Activated naive CD4-positive, alpha-beta T cell treated with anti-CD3 and anti-CD28 coated beads for 36 hours (primary cell): ENCODE measurements at regions of chr16 and their contacts with region 1.

Region 1: GRCh38 chr16:2429034-2429770 is at the start of gene CCNF:
- DNase-seq: peak; percentile 98
- H3K4me3 Mint-ChIP-seq: peak within 1 kb of the TSS; percentile 94
- H3K27ac Mint-ChIP-seq: peak within 1 kb of the TSS; percentile 81
- H3K4me1 Mint-ChIP-seq: peaks cover 16% of the 10 kb centered on the region
- H3K27me3 Mint-ChIP-seq: peaks cover 4% of the 10 kb centered on the region
- total RNA-seq, gene CCNF: 73.5 to 74.5 TPM

Region 2: GRCh38 chr16:2213817-2214720 is 215.1 kb before region 1 on chr16:
- CTCF ChIA-PET with region 1: no interaction called
- intact Hi-C with region 1: loop called (anchors 10 kb)
- DNase-seq: no peak
- H3K4me3 Mint-ChIP-seq: peak overlapping the region; percentile 73
- H3K27ac Mint-ChIP-seq: no peak overlapping the region
- H3K4me1 Mint-ChIP-seq: peaks cover 22% of the 10 kb centered on the region
- H3K27me3 Mint-ChIP-seq: no peaks in the 10 kb centered on the region

Region 3: DNA sequence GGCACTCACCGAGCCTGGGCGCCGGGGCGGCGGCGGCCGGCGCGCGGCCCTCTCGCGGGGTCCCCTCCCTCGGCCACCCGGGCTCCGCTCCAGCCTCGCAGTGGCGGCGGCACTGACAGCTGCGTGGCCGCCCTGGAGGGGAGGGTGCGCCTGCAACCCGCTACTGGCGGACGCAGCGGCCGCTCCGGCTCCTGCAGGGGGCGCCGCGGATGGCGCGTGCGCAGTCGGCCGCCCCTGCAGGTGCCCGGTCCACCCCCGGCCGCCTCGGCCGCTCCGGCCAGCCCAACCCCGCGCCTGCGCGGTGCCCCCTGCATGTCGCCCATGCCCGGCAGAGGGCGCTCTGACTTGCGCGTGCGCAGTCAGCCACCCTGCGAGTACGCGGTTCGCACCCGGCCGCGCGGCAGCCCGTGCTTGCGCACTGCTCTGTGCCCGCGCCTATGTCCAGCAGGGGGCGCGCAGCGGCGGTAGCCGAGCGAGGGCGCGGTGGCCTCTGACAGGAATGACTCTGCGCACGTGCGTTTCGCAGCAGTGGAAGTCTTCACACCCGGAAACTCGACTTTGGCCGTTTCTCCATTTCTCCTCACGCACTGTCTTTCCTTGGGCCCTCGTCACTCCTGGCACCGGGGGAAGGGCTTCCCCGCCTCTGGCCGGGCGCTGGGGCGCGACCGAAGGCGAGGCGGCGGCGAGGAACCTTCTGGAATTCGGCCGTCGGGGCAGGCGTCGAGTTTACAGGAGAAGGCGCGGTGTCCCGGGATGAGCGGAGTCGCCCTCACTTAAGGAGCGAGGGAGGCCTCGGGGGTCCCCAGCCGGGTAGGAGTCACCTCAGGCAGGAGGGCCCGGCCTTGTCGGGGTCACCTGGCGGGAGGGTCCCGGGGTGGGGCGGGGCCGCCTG is 88.4 kb before region 1 on chr16 and contains the start of gene ABCA3:
- CTCF ChIA-PET with region 1: no interaction called
- intact Hi-C with region 1: loop called (anchors 1 kb)
- DNase-seq: peak; percentile 95
- H3K4me3 Mint-ChIP-seq: peak within 1 kb of the TSS; percentile 85
- H3K27ac Mint-ChIP-seq: no peak within 1 kb of the TSS
- H3K4me1 Mint-ChIP-seq: peaks cover 24% of the 10 kb centered on the region
- H3K27me3 Mint-ChIP-seq: peaks cover 8% of the 10 kb centered on the region
- total RNA-seq, gene ABCA3: 2.6 to 3.1 TPM

Region 4: GRCh38 chr16:2365397-2366294 is 63.6 kb before region 1 on chr16:
- CTCF ChIA-PET with region 1: no interaction called
- intact Hi-C with region 1: no loop called
- DNase-seq: no peak
- H3K4me3 Mint-ChIP-seq: no peak overlapping the region
- H3K27ac Mint-ChIP-seq: no peak overlapping the region
- H3K4me1 Mint-ChIP-seq: no peaks in the 10 kb centered on the region
- H3K27me3 Mint-ChIP-seq: peaks cover 13% of the 10 kb centered on the region

Region 5: GRCh38 chr16:2474877-2475412 is 45.7 kb after region 1 on chr16 and contains the start of gene TBC1D24:
- CTCF ChIA-PET with region 1: no interaction called
- intact Hi-C with region 1: loop called (anchors 5 kb)
- DNase-seq: peak; percentile 77
- H3K4me3 Mint-ChIP-seq: peak within 1 kb of the TSS; percentile 77
- H3K27ac Mint-ChIP-seq: no peak within 1 kb of the TSS
- H3K4me1 Mint-ChIP-seq: peaks cover 18% of the 10 kb centered on the region
- H3K27me3 Mint-ChIP-seq: peaks cover 19% of the 10 kb centered on the region
- total RNA-seq, gene TBC1D24: 8.1 to 8.6 TPM

Region 6: GRCh38 chr16:2486645-2487516 is 57.7 kb after region 1 on chr16:
- CTCF ChIA-PET with region 1: no interaction called
- intact Hi-C with region 1: loop called (anchors 1 kb)
- DNase-seq: peak; percentile 94
- H3K4me3 Mint-ChIP-seq: peak overlapping the region; percentile 10
- H3K27ac Mint-ChIP-seq: peak overlapping the region; percentile 69
- H3K4me1 Mint-ChIP-seq: peaks cover 16% of the 10 kb centered on the region
- H3K27me3 Mint-ChIP-seq: no peaks in the 10 kb centered on the region

Region 7: GRCh38 chr16:2500918-2501750 is 71.9 kb after region 1 on chr16:
- CTCF ChIA-PET with region 1: interaction called, 3 read pairs
- intact Hi-C with region 1: loop called (anchors 1 kb)
- DNase-seq: peak; percentile 84
- H3K4me3 Mint-ChIP-seq: no peak overlapping the region
- H3K27ac Mint-ChIP-seq: no peak overlapping the region
- H3K4me1 Mint-ChIP-seq: peaks cover 2% of the 10 kb centered on the region
- H3K27me3 Mint-ChIP-seq: no peaks in the 10 kb centered on the region

Region 8: GRCh38 chr16:2513405-2514322 is 84.5 kb after region 1 on chr16 and contains the start of gene ATP6V0C:
- CTCF ChIA-PET with region 1: no interaction called
- intact Hi-C with region 1: loop called (anchors 2 kb)
- DNase-seq: peak; percentile 89
- H3K4me3 Mint-ChIP-seq: peak within 1 kb of the TSS; percentile 90
- H3K27ac Mint-ChIP-seq: peak within 1 kb of the TSS; percentile 91
- H3K4me1 Mint-ChIP-seq: peaks cover 49% of the 10 kb centered on the region
- H3K27me3 Mint-ChIP-seq: no peaks in the 10 kb centered on the region
- total RNA-seq, gene ATP6V0C: 81.9 TPM